K562 (cell line): ENCODE measurements at regions of chr10 and their contacts with region 1.

Region 1: DNA sequence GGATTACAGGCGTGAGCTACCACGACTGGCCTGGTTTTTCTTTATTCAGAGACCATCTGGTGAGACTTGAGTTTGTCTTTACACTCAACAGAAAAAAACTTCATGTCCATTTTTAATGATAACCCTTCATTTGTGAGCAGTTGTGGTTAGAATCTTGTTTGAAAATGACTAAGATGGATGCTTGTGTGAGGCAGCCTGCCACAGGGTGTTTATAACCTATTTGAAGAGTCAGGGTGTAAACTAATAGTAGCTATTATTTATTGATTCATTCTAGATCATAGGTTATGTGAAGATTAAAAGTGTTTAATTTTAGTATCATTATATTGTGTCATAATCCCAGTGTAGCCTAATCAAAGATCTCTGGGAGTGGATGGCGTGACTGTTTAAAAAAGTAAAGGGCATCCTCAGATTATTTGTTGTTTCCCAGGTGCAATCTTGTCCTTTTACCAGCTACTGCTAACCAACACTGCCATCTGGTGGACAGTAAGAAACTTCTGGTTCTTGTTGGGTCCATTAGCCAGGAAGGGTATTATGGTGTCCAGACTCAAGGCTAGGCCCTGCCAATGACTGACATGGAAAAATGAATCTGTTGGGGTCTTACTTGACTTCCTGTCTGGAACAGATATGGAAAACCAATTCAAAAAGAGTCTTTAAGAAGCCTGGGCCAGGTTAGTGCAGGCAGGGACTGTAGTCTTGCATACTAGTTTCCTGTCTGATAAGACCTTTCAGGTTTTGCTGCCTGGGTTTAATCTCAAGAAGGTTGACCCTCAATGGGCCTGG is 24.9 kb downstream of the NRBF2 start:
- DNase-seq: peak; percentile 67 to 92 (median 72)
- ATAC-seq: peak; percentile 87
- H3K4me3 ChIP-seq: no peak overlapping the region
- H3K27ac ChIP-seq: no peak overlapping the region
- H3K4me1 ChIP-seq: no peaks in the 10 kb centered on the region
- H3K27me3 ChIP-seq: no peaks in the 10 kb centered on the region
- CTCF ChIP-seq: peak; percentile 79 to 93 (median 83)
- EP300 ChIP-seq: no peak
- POLR2A ChIP-seq: no peak
- RAD21 ChIP-seq: peak; percentile 98 to 99

Region 2: DNA sequence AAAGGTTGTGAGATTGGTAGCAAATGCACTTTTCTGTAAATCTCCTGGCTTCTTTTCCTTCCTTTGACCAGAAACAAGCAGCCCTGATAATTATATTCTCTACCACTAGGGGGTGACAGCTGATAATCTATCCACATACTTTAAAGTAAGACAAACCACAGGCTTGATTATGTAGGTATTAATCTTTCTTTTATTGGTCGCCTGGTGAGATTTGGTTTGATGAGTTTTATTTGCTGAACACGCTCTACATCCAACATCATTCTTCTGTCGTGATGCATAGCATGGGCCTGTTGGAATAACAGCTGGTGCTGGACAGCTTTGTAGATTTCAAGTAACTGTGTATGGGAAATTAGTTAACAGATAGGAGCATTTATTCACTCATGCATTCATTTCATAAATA is 720.3 kb before region 1 on chr10:
- CTCF ChIA-PET with region 1: interaction called, 8 read pairs
- POLR2A ChIA-PET with region 1: no interaction called
- in situ Hi-C with region 1: no loop called
- intact Hi-C with region 1: loop called (anchors 1 kb)
- DNase-seq: peak; percentile 48 to 69 (median 62)
- ATAC-seq: peak; percentile 87
- H3K4me3 ChIP-seq: no peak overlapping the region
- H3K27ac ChIP-seq: no peak overlapping the region
- H3K4me1 ChIP-seq: no peaks in the 10 kb centered on the region
- H3K27me3 ChIP-seq: no peaks in the 10 kb centered on the region
- CTCF ChIP-seq: peak; percentile 54 to 83 (median 73); a peak in 5 of 6 replicates
- EP300 ChIP-seq: no peak
- POLR2A ChIP-seq: no peak
- RAD21 ChIP-seq: peak; percentile 75 to 81

Region 3: GRCh38 chr10:62594093-62594520 is 563.9 kb before region 1 on chr10:
- CTCF ChIA-PET with region 1: interaction called, 9 read pairs
- POLR2A ChIA-PET with region 1: no interaction called
- in situ Hi-C with region 1: no loop called
- intact Hi-C with region 1: loop called (anchors 1 kb)
- DNase-seq: peak; percentile 49 to 73 (median 56)
- ATAC-seq: peak; percentile 98
- H3K4me3 ChIP-seq: no peak overlapping the region
- H3K27ac ChIP-seq: no peak overlapping the region
- H3K4me1 ChIP-seq: no peaks in the 10 kb centered on the region
- H3K27me3 ChIP-seq: no peaks in the 10 kb centered on the region; a peak in 1 of 5 replicates
- CTCF ChIP-seq: peak; percentile 89 to 92 (median 92)
- EP300 ChIP-seq: no peak
- POLR2A ChIP-seq: no peak
- RAD21 ChIP-seq: peak; percentile 90 to 92

Region 4: DNA sequence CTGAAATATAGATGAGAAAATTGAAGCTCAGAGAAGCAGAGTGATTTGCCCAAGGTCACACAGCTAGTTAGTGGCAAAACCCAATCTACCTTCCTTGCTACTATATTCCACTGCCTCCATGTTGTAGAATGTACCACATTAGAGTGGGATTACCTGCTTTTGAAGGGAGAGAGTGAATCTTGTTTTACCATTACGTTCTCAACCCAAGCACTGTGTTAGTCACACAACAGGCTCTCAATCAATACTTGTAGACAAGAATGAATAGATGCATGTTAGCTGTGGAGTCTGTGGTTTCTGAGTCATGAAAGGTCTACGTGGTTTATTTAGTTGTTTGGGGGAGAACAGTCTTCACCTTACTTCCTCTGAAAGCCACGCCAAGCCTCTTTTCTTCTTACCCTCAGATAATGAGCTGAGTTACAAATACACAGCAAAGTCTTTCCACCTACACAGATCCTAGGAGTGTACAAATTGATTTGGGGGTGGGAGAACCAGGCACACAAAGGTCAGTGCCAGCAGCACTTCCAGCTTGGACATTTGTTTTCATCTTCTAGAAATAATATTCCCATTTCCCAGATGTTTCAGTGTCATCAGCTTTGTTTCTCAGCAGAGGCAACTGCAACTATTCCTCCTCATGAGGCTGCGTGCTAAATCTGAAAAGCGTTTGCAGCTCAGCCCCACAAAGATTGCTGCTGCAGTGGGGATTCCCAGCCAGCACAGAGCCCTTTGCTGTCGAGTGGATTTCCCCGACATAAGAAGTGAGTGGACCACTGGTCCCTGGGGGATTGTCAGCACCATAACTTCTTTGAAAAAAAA is 425.0 kb before region 1 on chr10:
- CTCF ChIA-PET with region 1: no interaction called
- POLR2A ChIA-PET with region 1: no interaction called
- in situ Hi-C with region 1: no loop called
- intact Hi-C with region 1: loop called (anchors 10 kb)
- DNase-seq: no peak
- ATAC-seq: no peak
- H3K4me3 ChIP-seq: no peak overlapping the region
- H3K27ac ChIP-seq: no peak overlapping the region
- H3K4me1 ChIP-seq: peaks cover 2 to 14% of the 10 kb centered on the region in 2 experiments; a peak in 4 of 5 replicates
- H3K27me3 ChIP-seq: no peaks in the 10 kb centered on the region
- CTCF ChIP-seq: no peak
- EP300 ChIP-seq: no peak
- POLR2A ChIP-seq: no peak
- RAD21 ChIP-seq: no peak

Region 5: DNA sequence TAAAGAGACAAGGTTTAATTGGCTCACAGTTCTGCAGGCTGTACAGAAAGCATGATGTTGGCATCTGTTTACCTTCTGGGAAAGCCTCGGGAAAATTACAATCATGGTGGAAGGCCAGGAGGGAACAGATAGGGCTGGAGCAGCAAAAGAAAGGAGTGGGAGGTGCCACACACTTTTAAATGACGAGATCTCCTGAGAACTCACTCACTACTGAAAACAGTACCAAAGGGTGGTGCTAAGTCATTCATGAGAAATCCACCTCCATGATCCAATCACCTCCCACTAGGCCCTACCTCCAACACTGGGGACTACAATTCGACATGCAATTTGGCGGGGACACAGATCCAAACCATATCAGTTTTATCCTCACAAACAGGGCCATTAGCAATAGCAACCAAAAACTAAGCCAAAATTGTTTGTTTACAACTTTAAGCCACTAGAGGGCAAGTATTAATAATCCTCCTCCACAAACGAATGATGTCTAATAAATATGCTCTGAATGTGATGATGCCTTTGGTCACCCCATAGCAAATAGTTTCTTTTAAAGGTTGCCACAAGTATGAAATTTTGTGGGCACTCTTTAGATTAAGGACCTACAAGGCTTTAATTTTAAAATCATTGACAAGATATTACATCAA is 154.1 kb before region 1 on chr10:
- CTCF ChIA-PET with region 1: interaction called, 3 read pairs
- POLR2A ChIA-PET with region 1: no interaction called
- in situ Hi-C with region 1: no loop called
- intact Hi-C with region 1: loop called (anchors 5 kb)
- DNase-seq: peak in 2 of 4 experiments; percentile 22
- ATAC-seq: no peak; the same call in 2 of the 3 replicates
- H3K4me3 ChIP-seq: no peak overlapping the region
- H3K27ac ChIP-seq: no peak overlapping the region
- H3K4me1 ChIP-seq: no peaks in the 10 kb centered on the region
- H3K27me3 ChIP-seq: peaks cover 0 to 2% of the 10 kb centered on the region in 2 experiments; a peak in 2 of 5 replicates
- CTCF ChIP-seq: peak; percentile 24 to 41 (median 39); a peak in 3 of 6 replicates
- EP300 ChIP-seq: no peak
- POLR2A ChIP-seq: no peak
- RAD21 ChIP-seq: peak in 1 of 2 experiments; percentile 44; a peak in 2 of 4 replicates

Region 6: GRCh38 chr10:63106111-63106755 is 51.8 kb before region 1 on chr10:
- CTCF ChIA-PET with region 1: no interaction called
- POLR2A ChIA-PET with region 1: no interaction called
- in situ Hi-C with region 1: no loop called
- intact Hi-C with region 1: no loop called
- DNase-seq: peak in 1 of 4 experiments; percentile 43
- ATAC-seq: peak; percentile 11
- H3K4me3 ChIP-seq: no peak overlapping the region
- H3K27ac ChIP-seq: peak overlapping the region; percentile 79; the same call in 2 of the 3 replicates
- H3K4me1 ChIP-seq: peaks cover 0 to 39% of the 10 kb centered on the region in 2 experiments; a peak in 3 of 5 replicates
- H3K27me3 ChIP-seq: no peaks in the 10 kb centered on the region
- CTCF ChIP-seq: no peak
- EP300 ChIP-seq: no peak; the same call in 1 of the 2 replicates
- POLR2A ChIP-seq: no peak
- RAD21 ChIP-seq: no peak

Region 7: GRCh38 chr10:63145782-63146181 is 12.3 kb before region 1 on chr10:
- CTCF ChIA-PET with region 1: no interaction called
- POLR2A ChIA-PET with region 1: interaction called, 14 read pairs
- in situ Hi-C with region 1: no loop called
- intact Hi-C with region 1: no loop called
- DNase-seq: no peak
- ATAC-seq: peak; percentile 32; the same call in 1 of the 3 replicates
- H3K4me3 ChIP-seq: no peak overlapping the region
- H3K27ac ChIP-seq: no peak overlapping the region
- H3K4me1 ChIP-seq: no peaks in the 10 kb centered on the region
- H3K27me3 ChIP-seq: no peaks in the 10 kb centered on the region
- CTCF ChIP-seq: no peak
- EP300 ChIP-seq: no peak
- POLR2A ChIP-seq: no peak
- RAD21 ChIP-seq: no peak

Region 8: GRCh38 chr10:64175271-64175962 is 1017.4 kb after region 1 on chr10:
- CTCF ChIA-PET with region 1: no interaction called
- POLR2A ChIA-PET with region 1: no interaction called
- in situ Hi-C with region 1: no loop called
- intact Hi-C with region 1: no loop called
- DNase-seq: no peak
- ATAC-seq: no peak
- H3K4me3 ChIP-seq: no peak overlapping the region
- H3K27ac ChIP-seq: no peak overlapping the region
- H3K4me1 ChIP-seq: no peaks in the 10 kb centered on the region
- H3K27me3 ChIP-seq: no peaks in the 10 kb centered on the region
- CTCF ChIP-seq: no peak
- EP300 ChIP-seq: no peak
- POLR2A ChIP-seq: no peak
- RAD21 ChIP-seq: no peak